Endothelial cell of umbilical vein (primary cell): ENCODE measurements at regions of chr19 and their contacts with region 1.

Region 1: GRCh38 chr19:45125926-45126493 is 33.0 kb downstream of the PPP1R37 start:
- DNase-seq: peak; percentile 52
- H3K4me3 ChIP-seq: no peak overlapping the region
- H3K27ac ChIP-seq: no peak overlapping the region
- H3K4me1 ChIP-seq: peaks cover 4% of the 10 kb centered on the region
- H3K27me3 ChIP-seq: no peaks in the 10 kb centered on the region
- CTCF ChIP-seq: peak; percentile 74 to 84
- POLR2A ChIP-seq: no peak

Region 2: DNA sequence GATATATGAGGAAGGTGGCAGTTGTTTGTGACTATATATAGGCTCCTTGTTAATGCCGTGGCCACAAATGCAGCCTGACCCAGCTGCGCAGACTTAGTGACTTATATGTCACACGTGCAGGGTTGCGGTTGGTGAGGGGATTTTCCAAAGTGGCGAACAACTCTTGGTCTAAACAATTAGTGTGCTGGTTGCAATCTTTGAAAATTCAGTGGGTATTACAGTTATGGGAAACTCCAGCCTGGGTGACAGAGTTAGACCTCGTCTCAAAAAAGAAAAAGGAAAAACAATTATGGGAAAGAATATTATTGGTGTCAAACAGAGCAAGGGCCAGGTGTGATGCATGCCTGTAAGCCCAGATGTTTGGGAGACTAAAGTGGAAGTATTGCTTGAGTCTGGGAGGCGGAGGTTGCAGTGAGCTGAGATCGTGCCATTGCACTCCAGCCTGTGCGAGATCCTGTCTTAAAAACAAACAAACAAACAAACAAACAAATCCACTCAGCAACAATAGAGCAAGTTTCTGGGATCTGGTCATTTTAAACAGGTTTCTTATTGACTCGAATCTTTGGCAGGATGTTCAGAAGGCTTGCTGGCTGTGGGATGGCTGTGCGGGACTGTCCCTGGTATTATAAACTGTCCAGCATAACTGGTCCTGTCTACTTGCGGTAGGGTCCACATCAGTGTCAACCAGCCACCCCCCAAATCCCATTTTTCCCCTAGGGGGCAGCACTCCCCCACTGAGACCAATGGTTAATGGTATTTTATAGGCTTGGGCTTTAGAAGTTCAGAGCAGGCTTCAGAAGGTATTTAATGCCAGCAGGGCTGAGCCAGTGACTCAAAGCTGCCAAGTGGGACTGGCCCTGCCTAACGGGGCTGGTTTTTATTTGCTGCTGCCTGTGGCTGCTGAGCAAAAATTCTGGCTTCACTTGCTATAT is 109.4 kb before region 1 on chr19:
- CTCF ChIA-PET with region 1: interaction called, 5 read pairs
- POLR2A ChIA-PET with region 1: no interaction called
- dilution Hi-C with region 1: no loop called
- intact Hi-C with region 1: loop called (anchors 1 kb)
- DNase-seq: peak; percentile 74
- H3K4me3 ChIP-seq: no peak overlapping the region
- H3K27ac ChIP-seq: no peak overlapping the region
- H3K4me1 ChIP-seq: no peaks in the 10 kb centered on the region
- H3K27me3 ChIP-seq: no peaks in the 10 kb centered on the region
- CTCF ChIP-seq: peak; percentile 70 to 76
- POLR2A ChIP-seq: no peak

Region 3: GRCh38 chr19:45137179-45137761 is 11.3 kb after region 1 on chr19:
- CTCF ChIA-PET with region 1: interaction called, 16 read pairs
- POLR2A ChIA-PET with region 1: no interaction called
- dilution Hi-C with region 1: no loop called
- intact Hi-C with region 1: no loop called
- DNase-seq: no peak
- H3K4me3 ChIP-seq: no peak overlapping the region
- H3K27ac ChIP-seq: no peak overlapping the region
- H3K4me1 ChIP-seq: no peaks in the 10 kb centered on the region
- H3K27me3 ChIP-seq: no peaks in the 10 kb centered on the region
- CTCF ChIP-seq: no peak
- POLR2A ChIP-seq: no peak